ENCODE measurements at regions of chr2 and their contacts with region 1.

Region 1: GRCh38 chr2:232668805-232669444 is 28.2 kb upstream of the GIGYF2 start:
- DNase-seq: peak in 1 of 3 donors; percentile 58
- ATAC-seq: peak; percentile 49 to 66
- H3K4me3 ChIP-seq: no peak overlapping the region
- H3K27ac ChIP-seq: no peak overlapping the region
- H3K4me1 ChIP-seq: peaks cover 4% of the 10 kb centered on the region
- H3K27me3 ChIP-seq: no peaks in the 10 kb centered on the region

Region 2: GRCh38 chr2:232600053-232600773 is 68.7 kb before region 1 on chr2:
- intact Hi-C with region 1: loop called in 2 of 4 experiments (anchors 10 kb)
- DNase-seq: peak in 1 of 3 donors; percentile 52
- ATAC-seq: peak; percentile 12
- H3K4me3 ChIP-seq: no peak overlapping the region
- H3K27ac ChIP-seq: no peak overlapping the region
- H3K4me1 ChIP-seq: no peaks in the 10 kb centered on the region
- H3K27me3 ChIP-seq: no peaks in the 10 kb centered on the region

Region 3: DNA sequence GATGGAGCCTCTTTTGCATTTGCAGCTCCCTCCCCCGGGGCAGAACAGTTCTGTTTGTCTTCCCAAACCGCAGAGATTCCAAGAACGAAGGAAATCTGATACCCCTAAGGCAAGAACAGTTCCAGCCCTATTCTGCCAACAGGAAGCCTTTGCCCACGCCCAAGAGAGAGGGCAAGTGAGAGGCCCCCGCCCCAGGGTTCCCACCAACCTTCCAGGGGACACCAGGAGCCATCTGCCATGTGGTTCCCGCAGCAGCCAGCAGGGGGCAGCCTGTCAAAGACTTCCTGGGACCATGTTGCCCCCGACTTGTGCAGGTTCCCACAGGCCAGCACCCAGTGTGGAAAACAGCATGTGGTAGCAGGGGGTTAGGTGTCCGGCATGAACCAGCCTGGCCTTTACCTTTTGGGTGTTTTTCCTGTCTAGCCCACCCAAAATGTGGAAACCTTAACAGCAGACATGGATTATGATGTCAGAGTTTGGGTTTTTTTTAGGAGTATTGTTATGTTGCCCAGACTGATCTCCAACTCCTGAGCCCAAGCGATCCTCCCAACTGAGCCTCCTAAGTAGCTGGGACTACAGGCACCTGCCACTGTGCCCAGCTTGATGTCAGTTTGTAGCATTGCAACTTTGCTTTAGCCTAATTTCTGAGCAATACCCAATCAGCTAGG is 57.2 kb before region 1 on chr2:
- intact Hi-C with region 1: loop called in 3 of 4 experiments (anchors 10 kb)
- DNase-seq: peak; percentile 58 to 86 (median 84)
- ATAC-seq: peak; percentile 33 to 65
- H3K4me3 ChIP-seq: no peak overlapping the region
- H3K27ac ChIP-seq: no peak overlapping the region
- H3K4me1 ChIP-seq: no peaks in the 10 kb centered on the region
- H3K27me3 ChIP-seq: no peaks in the 10 kb centered on the region

Region 4: DNA sequence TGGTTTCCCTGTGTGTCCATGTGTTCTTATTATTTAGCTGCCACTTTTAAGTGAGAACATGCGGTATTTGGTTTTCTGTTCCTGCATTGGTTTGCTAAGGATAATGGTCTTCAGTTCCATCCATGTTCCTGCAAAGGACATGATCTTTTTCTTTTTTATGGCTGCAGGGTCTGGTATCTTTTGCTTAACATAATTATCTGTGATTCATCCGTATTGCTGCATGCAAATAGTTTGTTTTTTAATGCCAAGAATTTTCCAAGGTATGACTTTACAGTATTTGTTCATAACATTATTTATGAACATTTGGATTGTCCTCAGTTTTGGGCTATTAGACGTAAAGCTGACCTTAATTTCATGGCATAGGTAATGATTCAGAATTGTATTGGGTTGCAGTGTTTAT is 46.0 kb after region 1 on chr2:
- intact Hi-C with region 1: no loop called
- DNase-seq: no peak
- ATAC-seq: no peak
- H3K4me3 ChIP-seq: no peak overlapping the region
- H3K27ac ChIP-seq: no peak overlapping the region
- H3K4me1 ChIP-seq: peaks cover 2% of the 10 kb centered on the region
- H3K27me3 ChIP-seq: no peaks in the 10 kb centered on the region

Region 5: GRCh38 chr2:232731470-232731869 is 62.5 kb after region 1 on chr2:
- intact Hi-C with region 1: no loop called
- DNase-seq: no peak
- ATAC-seq: no peak
- H3K4me3 ChIP-seq: no peak overlapping the region
- H3K27ac ChIP-seq: no peak overlapping the region
- H3K4me1 ChIP-seq: no peaks in the 10 kb centered on the region
- H3K27me3 ChIP-seq: no peaks in the 10 kb centered on the region

Region 6: GRCh38 chr2:232744963-232745362 is 76.0 kb after region 1 on chr2:
- intact Hi-C with region 1: no loop called
- DNase-seq: no peak
- ATAC-seq: no peak
- H3K4me3 ChIP-seq: no peak overlapping the region
- H3K27ac ChIP-seq: no peak overlapping the region
- H3K4me1 ChIP-seq: no peaks in the 10 kb centered on the region
- H3K27me3 ChIP-seq: no peaks in the 10 kb centered on the region

Measured in right cardiac atrium (tissue), 5 donors.